Heart left ventricle (tissue), 16 donors: ENCODE measurements at regions of chr2 and their contacts with region 1.

Region 1: GRCh38 chr2:39642051-39642742 is 23.5 kb upstream of the TMEM178A start:
- DNase-seq: peak in 3 of 5 donors; percentile 25 to 56 (median 33)
- ATAC-seq: peak; percentile 73 to 86 (median 80)
- H3K4me3 ChIP-seq: no peak overlapping the region
- H3K27ac ChIP-seq: no peak overlapping the region
- H3K4me1 ChIP-seq: peaks cover 0 to 23% (median 13%) of the 10 kb centered on the region in 12 donors
- H3K27me3 ChIP-seq: no peaks in the 10 kb centered on the region
- CTCF ChIP-seq: no peak
- POLR2A ChIP-seq: no peak

Region 2: GRCh38 chr2:39679805-39680204 is 37.6 kb after region 1 on chr2:
- intact Hi-C with region 1: loop called in 1 of 10 experiments (anchors 5 kb)
- DNase-seq: no peak
- ATAC-seq: peak; percentile 62 to 81 (median 80)
- H3K4me3 ChIP-seq: no peak overlapping the region
- H3K27ac ChIP-seq: peak overlapping the region in 7 of 12 donors; percentile 11 to 51 (median 40)
- H3K4me1 ChIP-seq: peaks cover 0 to 36% (median 5%) of the 10 kb centered on the region in 12 donors
- H3K27me3 ChIP-seq: no peaks in the 10 kb centered on the region
- CTCF ChIP-seq: no peak
- POLR2A ChIP-seq: no peak